ENCODE measurements at regions of chr19 and their contacts with region 1.

Region 1: DNA sequence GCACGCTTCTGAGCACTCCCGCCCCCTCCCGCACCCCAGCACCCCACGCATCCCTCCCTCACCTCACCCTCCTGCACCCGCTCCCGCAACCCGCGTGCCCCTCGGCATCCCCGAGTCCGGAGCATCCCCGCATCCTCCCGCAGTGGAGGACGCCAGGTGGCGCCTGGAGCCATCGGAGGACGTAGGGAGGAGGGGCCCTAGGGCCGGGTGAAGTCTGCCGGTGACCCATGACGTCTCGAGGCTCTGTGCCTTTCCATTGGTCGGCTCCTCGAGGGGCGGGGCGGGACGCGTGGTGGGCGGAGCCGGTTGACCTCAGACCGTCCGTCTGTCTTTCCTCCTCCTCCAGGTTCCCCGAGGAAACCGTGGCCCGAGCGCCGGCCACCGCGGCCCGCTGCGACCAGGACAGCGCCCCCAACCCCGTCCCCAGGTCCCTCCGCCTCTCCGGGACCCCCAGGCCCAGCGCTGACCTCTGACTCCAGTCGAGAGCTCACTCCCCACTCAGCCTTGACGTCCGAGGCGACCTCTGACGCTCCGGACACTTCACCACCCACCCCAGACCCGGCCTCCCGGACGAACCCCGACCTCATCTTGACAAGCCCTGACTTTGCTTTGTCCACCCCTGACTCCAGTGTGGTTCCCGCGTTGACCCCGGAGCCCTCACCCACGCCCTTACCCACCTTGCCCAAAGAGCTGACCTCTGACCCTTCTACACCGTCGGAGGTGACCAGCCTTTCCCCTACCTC is 19.9 kb downstream of the SBK2 start:
- DNase-seq: peak; percentile 95 to 97
- ATAC-seq: peak; percentile 98
- H3K4me3 ChIP-seq: no peak overlapping the region
- H3K27ac ChIP-seq: no peak overlapping the region
- H3K4me1 ChIP-seq: no peaks in the 10 kb centered on the region
- H3K27me3 ChIP-seq: no peaks in the 10 kb centered on the region

Region 2: GRCh38 chr19:55549500-55550320 is 32.7 kb after region 1 on chr19:
- intact Hi-C with region 1: loop called in 1 of 2 experiments (anchors 2 kb)
- DNase-seq: no peak
- ATAC-seq: peak; percentile 39
- H3K4me3 ChIP-seq: no peak overlapping the region
- H3K27ac ChIP-seq: peak overlapping the region in 1 of 2 donors; percentile 25
- H3K4me1 ChIP-seq: no peaks in the 10 kb centered on the region
- H3K27me3 ChIP-seq: no peaks in the 10 kb centered on the region

Region 3: GRCh38 chr19:55586976-55587668 is 70.1 kb after region 1 on chr19:
- intact Hi-C with region 1: loop called (anchors 5 kb)
- DNase-seq: peak; percentile 95 to 97
- ATAC-seq: peak; percentile 89
- H3K4me3 ChIP-seq: no peak overlapping the region
- H3K27ac ChIP-seq: no peak overlapping the region
- H3K4me1 ChIP-seq: no peaks in the 10 kb centered on the region
- H3K27me3 ChIP-seq: no peaks in the 10 kb centered on the region

Region 4: DNA sequence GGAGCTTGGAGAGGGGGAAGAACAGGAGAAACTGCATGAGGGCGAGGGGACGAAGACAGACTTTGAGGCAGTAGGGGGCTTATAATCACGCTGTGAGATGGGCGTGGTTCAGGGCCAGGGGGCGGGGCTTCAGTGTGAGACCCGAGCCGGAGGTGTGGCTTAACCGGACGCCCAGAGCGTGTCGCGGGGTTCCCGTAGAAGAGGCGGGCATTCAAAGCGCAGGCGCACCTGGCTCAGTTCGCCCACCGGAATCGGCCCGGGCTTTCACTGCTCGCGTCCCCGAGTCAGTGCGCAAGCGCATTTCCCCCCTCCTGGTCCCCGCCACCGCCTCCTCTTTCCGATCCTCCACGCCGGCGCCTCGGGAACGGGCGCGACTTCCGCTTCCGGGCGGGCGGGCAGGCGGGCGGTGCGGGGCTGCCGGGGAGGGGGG is 88.2 kb after region 1 on chr19:
- intact Hi-C with region 1: loop called (anchors 1 to 5 kb)
- DNase-seq: peak; percentile 99 to 100
- ATAC-seq: peak; percentile 91
- H3K4me3 ChIP-seq: peak overlapping the region; percentile 69 to 81
- H3K27ac ChIP-seq: peak overlapping the region in 1 of 2 donors; percentile 77
- H3K4me1 ChIP-seq: no peaks in the 10 kb centered on the region
- H3K27me3 ChIP-seq: no peaks in the 10 kb centered on the region

Region 5: DNA sequence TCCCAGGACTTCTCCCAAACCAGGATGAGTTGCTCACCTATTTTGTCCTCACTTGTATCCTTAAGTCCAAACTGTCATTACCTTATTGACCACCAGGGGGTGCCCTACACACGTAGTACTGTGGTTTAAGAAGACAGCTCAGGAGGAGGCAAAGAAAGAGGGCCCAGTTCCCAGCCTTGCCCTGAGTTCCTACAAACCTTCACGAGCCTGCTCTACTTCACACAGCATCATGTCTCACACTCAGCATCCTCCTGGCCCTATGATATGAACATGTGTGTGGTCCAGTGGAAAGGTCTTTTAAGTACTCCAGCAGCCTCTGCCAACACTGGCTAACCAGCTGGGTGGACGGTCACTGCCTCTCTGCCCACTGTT is 115.4 kb after region 1 on chr19:
- intact Hi-C with region 1: loop called (anchors 5 kb)
- DNase-seq: peak in 1 of 2 donors; percentile 84
- ATAC-seq: peak; percentile 85
- H3K4me3 ChIP-seq: no peak overlapping the region
- H3K27ac ChIP-seq: peak overlapping the region in 1 of 2 donors; percentile 1
- H3K4me1 ChIP-seq: no peaks in the 10 kb centered on the region
- H3K27me3 ChIP-seq: no peaks in the 10 kb centered on the region